Natural killer cell (primary cell): ENCODE measurements at regions of chr2 and their contacts with region 1.

Region 1: DNA sequence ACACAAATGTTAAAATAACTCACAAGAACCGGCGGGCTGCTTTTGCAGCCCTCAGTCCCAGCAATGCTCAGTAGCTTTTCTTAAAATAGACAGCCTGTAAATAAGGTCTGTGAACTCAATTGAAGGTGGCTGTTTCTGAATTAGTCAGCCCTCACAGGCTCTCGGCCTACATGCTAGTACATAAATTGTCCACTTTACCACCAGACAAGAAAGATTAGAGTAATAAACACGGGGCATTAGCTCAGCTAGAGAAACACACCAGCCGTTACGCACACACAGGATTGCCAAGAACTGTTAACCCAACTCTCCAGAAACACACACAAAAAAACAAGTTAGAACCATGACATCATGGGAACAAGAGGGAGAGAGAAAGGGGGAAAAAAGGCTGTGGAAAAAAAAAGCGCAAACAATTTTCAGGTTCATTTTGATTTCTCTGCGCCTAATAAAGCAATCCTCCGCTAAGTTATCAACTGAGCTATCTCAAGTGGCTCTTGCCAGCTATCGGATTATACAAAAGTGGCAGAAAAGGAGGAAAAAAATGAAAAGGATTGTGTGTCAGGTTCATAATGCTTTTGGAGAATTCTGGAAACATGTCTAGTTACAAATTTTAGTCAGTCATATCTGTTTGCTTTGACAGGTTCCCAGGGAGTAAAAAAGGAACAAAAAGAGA is 89.1 kb downstream of the ZEB2 start:
- DNase-seq: peak in 1 of 2 donors; percentile 34
- ATAC-seq: peak; percentile 39 to 54 (median 52)
- H3K4me3 ChIP-seq: peak overlapping the region; percentile 3
- H3K4me3 Mint-ChIP-seq: no peak overlapping the region
- H3K27ac ChIP-seq: peak overlapping the region; percentile 57
- H3K27ac Mint-ChIP-seq: no peak overlapping the region
- H3K4me1 ChIP-seq: peaks cover 5% of the 10 kb centered on the region
- H3K4me1 Mint-ChIP-seq: peaks cover 14 to 23% of the 10 kb centered on the region in 2 donors
- H3K27me3 ChIP-seq: no peaks in the 10 kb centered on the region
- H3K27me3 Mint-ChIP-seq: no peaks in the 10 kb centered on the region
- CTCF ChIP-seq: no peak

Region 2: GRCh38 chr2:143321994-143322393 is 1108.9 kb before region 1 on chr2:
- intact Hi-C with region 1: no loop called
- DNase-seq: no peak
- ATAC-seq: no peak
- H3K4me3 ChIP-seq: no peak overlapping the region
- H3K4me3 Mint-ChIP-seq: no peak overlapping the region
- H3K27ac ChIP-seq: no peak overlapping the region
- H3K27ac Mint-ChIP-seq: no peak overlapping the region
- H3K4me1 ChIP-seq: no peaks in the 10 kb centered on the region
- H3K4me1 Mint-ChIP-seq: peaks cover 41 to 58% of the 10 kb centered on the region in 2 donors
- H3K27me3 ChIP-seq: no peaks in the 10 kb centered on the region
- H3K27me3 Mint-ChIP-seq: no peaks in the 10 kb centered on the region
- CTCF ChIP-seq: no peak

Region 3: DNA sequence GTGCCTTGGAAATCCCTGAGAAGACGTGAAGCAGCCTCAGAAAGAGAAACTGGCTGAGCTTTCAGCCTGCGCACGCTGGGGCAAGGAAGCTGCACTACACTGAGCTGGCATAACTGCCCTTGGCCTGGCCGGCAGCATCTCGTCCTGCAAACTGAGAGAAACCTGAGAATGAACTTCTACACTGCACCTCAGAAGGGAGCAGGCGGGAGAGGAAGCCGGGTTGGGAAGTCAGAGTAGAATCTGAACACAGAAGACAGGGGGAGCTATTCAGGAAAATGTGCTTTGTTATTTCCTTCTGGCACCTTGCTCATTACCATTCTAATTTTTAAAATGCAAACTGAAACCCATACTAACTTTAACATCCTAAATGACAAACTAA is 18.2 kb after region 1 on chr2:
- intact Hi-C with region 1: loop called (anchors 2 kb)
- DNase-seq: peak in 1 of 2 donors; percentile 52
- ATAC-seq: peak; percentile 21 to 63 (median 36)
- H3K4me3 ChIP-seq: no peak overlapping the region
- H3K4me3 Mint-ChIP-seq: peak overlapping the region; percentile 65
- H3K27ac ChIP-seq: peak overlapping the region; percentile 70
- H3K27ac Mint-ChIP-seq: peak overlapping the region in 1 of 2 donors; percentile 86
- H3K4me1 ChIP-seq: peaks cover 27% of the 10 kb centered on the region
- H3K4me1 Mint-ChIP-seq: peaks cover 90 to 91% of the 10 kb centered on the region in 2 donors
- H3K27me3 ChIP-seq: no peaks in the 10 kb centered on the region
- H3K27me3 Mint-ChIP-seq: no peaks in the 10 kb centered on the region
- CTCF ChIP-seq: no peak

Region 4: DNA sequence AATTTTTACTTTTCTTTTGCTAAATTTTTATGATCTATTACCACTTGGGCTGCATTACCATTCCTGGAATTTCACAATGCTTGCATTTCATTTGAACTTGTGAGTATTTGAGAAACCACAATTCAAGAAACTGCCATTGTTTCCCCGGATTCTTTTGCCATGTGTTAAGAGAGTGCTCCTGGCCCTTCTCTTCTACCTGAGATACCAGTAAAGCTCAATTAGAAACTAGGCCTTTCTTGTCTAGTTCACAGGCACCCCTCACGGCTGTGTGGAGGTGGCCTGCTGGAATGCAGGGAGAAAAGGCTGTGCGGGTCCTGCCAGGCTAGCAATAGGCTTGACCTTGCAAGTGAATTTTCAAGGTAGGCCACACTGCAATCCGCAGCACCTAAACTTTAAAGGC is 48.3 kb after region 1 on chr2:
- intact Hi-C with region 1: loop called (anchors 5 kb)
- DNase-seq: no peak
- ATAC-seq: no peak
- H3K4me3 ChIP-seq: no peak overlapping the region
- H3K4me3 Mint-ChIP-seq: peak overlapping the region; percentile 43
- H3K27ac ChIP-seq: peak overlapping the region; percentile 4
- H3K27ac Mint-ChIP-seq: peak overlapping the region in 1 of 2 donors; percentile 45
- H3K4me1 ChIP-seq: peaks cover 24% of the 10 kb centered on the region
- H3K4me1 Mint-ChIP-seq: peaks cover 80 to 87% of the 10 kb centered on the region in 2 donors
- H3K27me3 ChIP-seq: no peaks in the 10 kb centered on the region
- H3K27me3 Mint-ChIP-seq: no peaks in the 10 kb centered on the region
- CTCF ChIP-seq: no peak

Region 5: DNA sequence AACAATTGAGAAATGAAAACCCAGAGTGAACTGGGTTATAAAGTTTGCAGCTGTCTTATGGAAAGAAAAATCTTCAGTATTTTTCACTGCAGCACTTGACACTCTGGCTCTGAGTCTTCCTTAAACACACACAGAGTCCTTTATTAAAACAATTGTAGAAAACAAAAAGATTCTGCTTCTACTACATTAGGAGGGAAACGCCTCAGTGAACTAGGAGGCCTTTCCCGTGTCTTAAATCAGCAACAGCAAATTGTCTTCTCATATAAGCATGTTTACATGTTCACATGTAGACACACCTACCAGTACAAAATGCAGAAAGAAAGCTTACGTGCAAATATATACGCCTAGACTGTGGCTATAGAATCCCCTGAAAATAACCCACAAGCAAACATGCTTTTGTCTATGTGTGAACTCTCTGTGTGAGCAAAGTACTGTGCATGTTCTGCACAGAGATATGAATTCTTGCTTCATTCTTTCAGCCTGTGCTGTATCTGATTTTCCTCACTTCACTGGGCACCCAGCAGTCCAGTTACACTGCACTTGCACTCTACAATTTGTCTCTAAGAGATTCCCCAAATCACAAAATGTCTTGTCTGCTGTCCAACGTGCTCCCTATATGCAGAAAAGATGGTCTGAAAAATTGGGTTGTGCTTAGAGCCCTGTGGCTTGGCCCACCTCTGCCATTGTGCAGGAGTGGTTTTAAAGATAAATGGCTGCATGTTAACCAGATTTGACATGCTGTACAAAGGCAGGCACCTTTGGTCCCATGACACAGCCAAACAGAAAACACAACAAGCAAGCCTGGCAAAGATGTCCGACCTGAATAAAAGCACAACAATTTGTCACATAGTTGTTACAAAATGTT is 64.6 kb after region 1 on chr2:
- intact Hi-C with region 1: loop called (anchors 5 kb)
- DNase-seq: no peak
- ATAC-seq: peak; percentile 57 to 76 (median 69)
- H3K4me3 ChIP-seq: no peak overlapping the region
- H3K4me3 Mint-ChIP-seq: peak overlapping the region; percentile 75
- H3K27ac ChIP-seq: peak overlapping the region; percentile 37
- H3K27ac Mint-ChIP-seq: peak overlapping the region; percentile 82 to 89
- H3K4me1 ChIP-seq: peaks cover 31% of the 10 kb centered on the region
- H3K4me1 Mint-ChIP-seq: peaks cover 79 to 85% of the 10 kb centered on the region in 2 donors
- H3K27me3 ChIP-seq: no peaks in the 10 kb centered on the region
- H3K27me3 Mint-ChIP-seq: no peaks in the 10 kb centered on the region
- CTCF ChIP-seq: no peak